ENCODE measurements at regions of chr1 and their contacts with region 1.

Region 1: GRCh38 chr1:244864253-244865027 is at the start of gene HNRNPU:
- DNase-seq: peak; percentile 94 to 98 (median 96)
- ATAC-seq: peak; percentile 60 to 61
- H3K4me3 Mint-ChIP-seq: peak within 1 kb of the TSS; percentile 87 to 97 (median 94)
- H3K27ac Mint-ChIP-seq: peak within 1 kb of the TSS; percentile 97 to 100 (median 98)
- H3K4me1 Mint-ChIP-seq: peaks cover 21 to 56% (median 40%) of the 10 kb centered on the region in 4 donors
- H3K27me3 Mint-ChIP-seq: peaks cover 0 to 2% (median 0%) of the 10 kb centered on the region in 5 donors
- polyA plus RNA-seq, gene HNRNPU: 179 to 392 (median 281) TPM

Region 2: DNA sequence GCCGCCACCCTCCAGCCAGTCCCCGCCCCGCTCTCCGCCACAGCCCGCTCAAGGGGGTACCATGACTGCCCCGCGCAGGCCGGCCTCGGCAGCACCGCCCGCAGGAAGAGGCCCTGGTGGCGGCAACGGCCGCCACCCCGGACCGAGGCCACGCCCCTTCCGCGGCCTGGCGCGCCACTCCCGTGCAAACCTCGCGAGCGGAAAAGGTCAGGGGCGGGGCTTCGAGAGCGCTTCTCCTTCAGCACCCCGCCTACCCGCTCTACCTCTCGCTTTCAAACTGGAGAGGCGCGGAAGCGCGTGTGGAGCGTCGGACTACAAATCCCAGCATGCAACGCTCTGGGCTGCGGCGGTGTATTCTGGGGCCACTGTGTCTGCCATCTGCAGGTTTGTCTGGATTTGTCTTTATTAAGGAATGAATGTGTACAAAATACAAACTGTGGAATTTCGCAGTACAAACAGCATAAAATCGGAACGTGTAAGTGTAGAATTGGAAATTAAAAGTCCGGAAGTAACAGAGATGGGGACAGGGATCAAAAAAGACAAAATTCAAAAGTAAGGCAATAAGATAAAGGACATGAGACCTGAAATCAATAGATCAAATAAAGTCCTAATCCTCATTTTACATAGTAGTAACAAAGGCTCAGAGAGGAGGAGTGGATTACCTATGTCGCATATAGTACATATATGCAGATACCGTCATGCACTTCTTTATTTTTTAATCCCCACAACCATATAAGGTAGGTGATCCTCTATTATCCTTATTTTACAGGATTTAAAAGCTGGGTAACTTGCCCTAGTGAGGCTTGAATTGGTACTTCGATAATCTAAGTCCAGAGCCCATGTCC is 412.3 kb before region 1 on chr1:
- POLR2A ChIA-PET with region 1: interaction called, 20 read pairs
- DNase-seq: peak; percentile 92 to 99 (median 98)
- ATAC-seq: peak; percentile 82 to 88
- H3K4me3 Mint-ChIP-seq: peak overlapping the region; percentile 81 to 99 (median 92)
- H3K27ac Mint-ChIP-seq: peak overlapping the region; percentile 93 to 99 (median 97)
- H3K4me1 Mint-ChIP-seq: peaks cover 22 to 41% (median 38%) of the 10 kb centered on the region in 4 donors
- H3K27me3 Mint-ChIP-seq: no peaks in the 10 kb centered on the region

Region 3: DNA sequence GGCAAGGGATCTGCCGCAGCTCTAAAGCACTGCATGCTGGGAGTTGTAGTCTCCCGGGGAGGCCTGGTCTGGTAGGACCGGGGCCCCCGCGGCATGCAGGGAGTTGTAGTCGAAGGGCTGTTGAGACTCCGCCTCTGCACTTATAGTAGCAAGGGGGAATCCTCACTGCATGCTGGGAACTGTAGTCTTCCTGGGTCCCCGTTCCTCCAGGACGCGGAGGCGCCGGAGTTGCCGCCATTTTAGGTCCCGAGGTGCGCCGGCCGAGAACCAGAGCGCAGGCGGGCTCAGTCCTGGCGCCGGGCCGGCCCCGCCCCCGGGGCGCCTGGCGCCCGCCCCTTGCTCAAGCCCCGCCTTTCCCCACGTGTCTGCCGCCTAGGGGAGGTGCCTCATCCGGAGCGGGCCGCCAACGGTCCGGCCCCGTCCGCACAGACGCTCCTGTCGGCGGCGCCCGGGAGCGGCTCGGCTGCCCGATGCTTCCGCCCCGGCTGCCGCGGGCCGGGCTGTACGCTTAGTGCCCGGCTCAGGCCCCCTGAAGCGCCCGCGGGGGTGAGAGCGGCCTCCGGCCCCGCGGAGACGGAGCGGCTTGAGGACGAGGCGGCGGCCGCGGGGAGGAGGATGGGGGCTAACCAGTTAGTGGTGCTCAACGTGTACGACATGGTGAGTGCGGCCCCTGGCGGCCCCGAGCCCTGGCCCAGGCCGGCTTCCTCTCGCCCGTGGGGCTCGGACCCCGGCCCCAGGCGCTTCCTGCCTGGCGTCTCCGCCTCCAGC is 211.6 kb before region 1 on chr1 and contains the start of gene DESI2:
- POLR2A ChIA-PET with region 1: interaction called, 34 read pairs
- DNase-seq: peak; percentile 90 to 100 (median 98)
- ATAC-seq: peak; percentile 91 to 92
- H3K4me3 Mint-ChIP-seq: peak within 1 kb of the TSS in 7 of 10 donors; percentile 79 to 91 (median 88)
- H3K27ac Mint-ChIP-seq: peak within 1 kb of the TSS; percentile 63 to 95 (median 92)
- H3K4me1 Mint-ChIP-seq: peaks cover 15 to 23% (median 18%) of the 10 kb centered on the region in 4 donors
- H3K27me3 Mint-ChIP-seq: no peaks in the 10 kb centered on the region
- polyA plus RNA-seq, gene DESI2: 10.8 to 13.1 (median 12.9) TPM

Region 4: GRCh38 chr1:244835276-244836134 is 28.9 kb before region 1 on chr1 and contains the start of gene COX20:
- POLR2A ChIA-PET with region 1: interaction called, 1,109 read pairs
- DNase-seq: peak; percentile 80 to 98 (median 90)
- ATAC-seq: peak; percentile 63
- H3K4me3 Mint-ChIP-seq: peak within 1 kb of the TSS; percentile 93 to 99 (median 96)
- H3K27ac Mint-ChIP-seq: peak within 1 kb of the TSS; percentile 97 to 100 (median 100)
- H3K4me1 Mint-ChIP-seq: peaks cover 24 to 59% (median 49%) of the 10 kb centered on the region in 4 donors
- H3K27me3 Mint-ChIP-seq: no peaks in the 10 kb centered on the region
- polyA plus RNA-seq, gene COX20: 31.4 to 52.6 (median 49.3) TPM

Region 5: DNA sequence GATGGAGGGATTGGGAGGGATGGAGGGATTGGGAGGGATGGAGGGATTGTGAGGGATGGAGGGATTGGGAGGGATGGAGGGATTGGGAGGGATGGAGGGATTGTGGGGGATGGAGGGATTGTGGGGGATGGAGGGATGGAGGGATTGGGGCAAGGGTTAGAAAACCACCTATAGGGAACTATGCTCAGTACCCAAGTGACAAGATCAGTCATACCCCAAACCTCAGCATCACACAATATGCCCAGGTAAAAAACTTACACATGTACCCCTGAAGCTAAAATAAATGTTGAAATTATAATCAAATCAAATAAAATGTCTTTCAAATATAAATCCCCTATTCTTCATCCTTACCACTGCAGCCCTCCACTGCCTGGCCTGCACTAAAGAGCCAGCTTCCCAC is 72.7 kb after region 1 on chr1:
- POLR2A ChIA-PET with region 1: no interaction called
- DNase-seq: no peak
- ATAC-seq: no peak
- H3K4me3 Mint-ChIP-seq: no peak overlapping the region
- H3K27ac Mint-ChIP-seq: no peak overlapping the region
- H3K4me1 Mint-ChIP-seq: peaks cover 0 to 7% (median 0%) of the 10 kb centered on the region in 4 donors
- H3K27me3 Mint-ChIP-seq: peaks cover 0 to 2% (median 0%) of the 10 kb centered on the region in 5 donors

Region 6: DNA sequence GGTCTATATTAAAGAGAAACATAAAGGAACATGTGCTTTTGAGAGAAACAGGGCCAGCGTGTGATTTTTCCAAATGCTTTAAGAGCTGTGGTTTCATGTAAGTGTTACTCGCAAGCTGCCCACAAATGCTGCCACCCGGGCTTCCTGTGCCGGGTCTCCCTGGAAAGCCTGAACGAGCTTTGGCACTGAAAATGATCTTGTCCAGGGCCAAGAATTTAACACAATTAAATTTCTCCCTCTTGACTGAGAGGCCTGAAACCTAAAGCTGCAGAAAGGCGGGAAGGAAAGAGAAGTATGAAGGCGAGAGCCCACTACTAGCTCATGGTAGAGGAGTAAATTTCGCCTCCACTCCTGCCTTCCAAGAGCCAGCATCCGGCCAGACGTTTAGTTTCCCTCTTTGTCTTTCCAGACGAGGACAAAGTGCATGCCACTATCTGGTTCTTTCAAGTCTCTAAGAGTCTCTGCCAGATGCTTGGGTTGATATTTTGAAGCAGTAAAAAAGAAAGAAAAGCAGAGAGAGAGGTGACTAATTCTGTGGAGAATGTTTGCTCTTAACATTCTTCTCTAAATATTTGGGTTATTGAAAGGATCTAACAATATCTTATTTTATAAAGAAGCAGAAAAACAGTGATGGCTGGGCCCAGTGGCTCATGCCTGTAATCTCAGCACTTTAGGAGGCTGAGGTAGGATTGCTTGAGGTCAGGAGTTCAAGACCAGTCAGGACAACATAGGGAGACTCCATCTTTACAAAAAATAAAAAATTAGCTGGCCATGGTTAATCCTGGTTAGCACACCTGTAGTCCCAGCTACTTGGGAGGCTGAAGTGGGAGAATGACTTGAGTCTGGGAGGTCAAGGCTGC is 99.9 kb after region 1 on chr1:
- POLR2A ChIA-PET with region 1: interaction called, 366 read pairs
- DNase-seq: peak in 1 of 10 donors; percentile 2
- ATAC-seq: peak; percentile 27 to 54
- H3K4me3 Mint-ChIP-seq: peak overlapping the region in 3 of 10 donors; percentile 12 to 29 (median 15)
- H3K27ac Mint-ChIP-seq: peak overlapping the region in 7 of 10 donors; percentile 29 to 82 (median 53)
- H3K4me1 Mint-ChIP-seq: peaks cover 4 to 37% (median 19%) of the 10 kb centered on the region in 4 donors
- H3K27me3 Mint-ChIP-seq: no peaks in the 10 kb centered on the region

Region 7: GRCh38 chr1:245045087-245045881 is 180.8 kb after region 1 on chr1:
- POLR2A ChIA-PET with region 1: interaction called, 10 read pairs
- DNase-seq: no peak
- ATAC-seq: no peak
- H3K4me3 Mint-ChIP-seq: no peak overlapping the region
- H3K27ac Mint-ChIP-seq: no peak overlapping the region
- H3K4me1 Mint-ChIP-seq: peaks cover 0 to 3% (median 1%) of the 10 kb centered on the region in 4 donors
- H3K27me3 Mint-ChIP-seq: no peaks in the 10 kb centered on the region

Region 8: GRCh38 chr1:245173446-245174211 is 309.2 kb after region 1 on chr1:
- POLR2A ChIA-PET with region 1: no interaction called
- DNase-seq: no peak
- ATAC-seq: no peak
- H3K4me3 Mint-ChIP-seq: no peak overlapping the region
- H3K27ac Mint-ChIP-seq: no peak overlapping the region
- H3K4me1 Mint-ChIP-seq: peaks cover 0 to 4% (median 1%) of the 10 kb centered on the region in 4 donors
- H3K27me3 Mint-ChIP-seq: peaks cover 7 to 16% (median 15%) of the 10 kb centered on the region in 5 donors